Naive thymus-derived CD4-positive, alpha-beta T cell (primary cell): ENCODE measurements at regions of chr20 and their contacts with region 1.

Region 1: GRCh38 chr20:63553227-63553932 is 579 bp upstream of the FNDC11 start:
- DNase-seq: peak; percentile 81 to 96 (median 88)
- ATAC-seq: peak; percentile 92
- H3K4me3 ChIP-seq: peak overlapping the region; percentile 68
- H3K4me3 Mint-ChIP-seq: peak overlapping the region; percentile 70 to 85 (median 76)
- H3K27ac ChIP-seq: peak overlapping the region; percentile 70
- H3K27ac Mint-ChIP-seq: peak overlapping the region; percentile 62 to 97 (median 92)
- H3K4me1 ChIP-seq: peaks cover 13 to 21% of the 10 kb centered on the region in 2 donors
- H3K4me1 Mint-ChIP-seq: peaks cover 9 to 18% (median 13%) of the 10 kb centered on the region in 7 donors
- H3K27me3 ChIP-seq: no peaks in the 10 kb centered on the region
- H3K27me3 Mint-ChIP-seq: peaks cover 0 to 19% (median 5%) of the 10 kb centered on the region in 5 donors

Region 2: GRCh38 chr20:63567386-63568169 is 14.2 kb after region 1 on chr20:
- CTCF ChIA-PET with region 1: no interaction called
- POLR2A ChIA-PET with region 1: interaction called, 10 read pairs
- intact Hi-C with region 1: loop called (anchors 2 kb)
- DNase-seq: peak in 8 of 9 donors; percentile 33 to 66 (median 42)
- ATAC-seq: peak; percentile 84
- H3K4me3 ChIP-seq: peak overlapping the region; percentile 62
- H3K4me3 Mint-ChIP-seq: peak overlapping the region; percentile 70 to 86 (median 82)
- H3K27ac ChIP-seq: no peak overlapping the region
- H3K27ac Mint-ChIP-seq: peak overlapping the region in 5 of 9 donors; percentile 32 to 59 (median 48)
- H3K4me1 ChIP-seq: peaks cover 19 to 28% of the 10 kb centered on the region in 2 donors
- H3K4me1 Mint-ChIP-seq: peaks cover 9 to 34% (median 21%) of the 10 kb centered on the region in 7 donors
- H3K27me3 ChIP-seq: no peaks in the 10 kb centered on the region
- H3K27me3 Mint-ChIP-seq: no peaks in the 10 kb centered on the region

Region 3: GRCh38 chr20:63627129-63627750 is 73.9 kb after region 1 on chr20:
- CTCF ChIA-PET with region 1: no interaction called
- POLR2A ChIA-PET with region 1: interaction called, 6 read pairs
- intact Hi-C with region 1: loop called in 1 of 2 experiments (anchors 1 kb)
- DNase-seq: peak; percentile 74 to 99 (median 97)
- ATAC-seq: peak; percentile 93
- H3K4me3 ChIP-seq: peak overlapping the region; percentile 96
- H3K4me3 Mint-ChIP-seq: peak overlapping the region; percentile 93 to 99 (median 98)
- H3K27ac ChIP-seq: peak overlapping the region; percentile 85
- H3K27ac Mint-ChIP-seq: peak overlapping the region; percentile 79 to 98 (median 95)
- H3K4me1 ChIP-seq: peaks cover 29 to 40% of the 10 kb centered on the region in 2 donors
- H3K4me1 Mint-ChIP-seq: peaks cover 28 to 64% (median 42%) of the 10 kb centered on the region in 7 donors
- H3K27me3 ChIP-seq: no peaks in the 10 kb centered on the region
- H3K27me3 Mint-ChIP-seq: no peaks in the 10 kb centered on the region

Region 4: DNA sequence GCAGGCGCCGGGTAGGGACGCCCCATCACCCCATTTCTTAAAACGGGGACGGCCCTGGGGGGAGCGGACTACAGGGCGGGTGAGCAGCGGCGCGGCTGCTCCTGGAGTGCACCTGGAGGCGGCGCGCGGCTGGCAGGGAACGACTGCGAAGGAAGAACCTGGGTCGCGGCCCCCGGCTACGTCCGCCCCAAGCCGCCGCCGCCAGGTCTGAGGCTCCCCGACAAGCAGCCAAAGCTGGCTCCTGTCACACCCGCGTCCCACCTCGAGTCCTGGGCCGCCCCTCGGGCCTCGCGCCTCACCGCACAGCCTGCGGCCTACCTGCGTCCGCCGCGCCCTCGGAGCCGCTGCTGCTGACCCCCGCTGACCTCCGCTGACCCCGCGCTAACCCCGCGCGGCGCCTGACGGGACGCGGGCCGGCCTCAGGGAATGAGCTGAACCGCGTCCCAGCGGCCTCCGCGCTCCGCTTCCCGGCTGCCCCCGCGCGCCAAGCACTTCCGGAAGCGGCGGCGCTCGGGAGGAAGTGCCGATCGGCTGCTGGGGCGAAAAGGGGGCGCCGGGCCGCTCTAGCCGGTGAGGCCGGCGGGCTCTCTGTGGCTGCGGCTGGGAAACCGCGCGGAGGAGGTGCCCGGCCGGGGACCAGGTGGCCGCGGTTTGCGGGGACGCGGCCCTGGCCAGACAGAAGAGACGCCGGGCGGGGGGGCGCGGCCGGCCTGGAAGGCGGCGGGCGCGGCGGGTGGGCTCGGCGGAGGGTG is 154.3 kb after region 1 on chr20 and contains the starts of genes ARFRP1 and ZGPAT:
- CTCF ChIA-PET with region 1: no interaction called
- POLR2A ChIA-PET with region 1: no interaction called
- intact Hi-C with region 1: no loop called
- DNase-seq: peak; percentile 77 to 92 (median 88)
- ATAC-seq: peak; percentile 92
- H3K4me3 ChIP-seq: peak within 1 kb of the TSS; percentile 91
- H3K4me3 Mint-ChIP-seq: peak within 1 kb of the TSS; percentile 86 to 95 (median 90)
- H3K27ac ChIP-seq: peak within 1 kb of the TSS; percentile 81
- H3K27ac Mint-ChIP-seq: peak within 1 kb of the TSS; percentile 82 to 97 (median 87)
- H3K4me1 ChIP-seq: peaks cover 22 to 30% of the 10 kb centered on the region in 2 donors
- H3K4me1 Mint-ChIP-seq: peaks cover 33 to 61% (median 46%) of the 10 kb centered on the region in 7 donors
- H3K27me3 ChIP-seq: no peaks in the 10 kb centered on the region
- H3K27me3 Mint-ChIP-seq: no peaks in the 10 kb centered on the region
- total RNA-seq, gene ARFRP1: 55.4 to 92.1 (median 66.2) TPM
- total RNA-seq, gene ZGPAT: 42.9 to 49.9 (median 45.4) TPM

Region 5: GRCh38 chr20:63739130-63740069 is 186.0 kb after region 1 on chr20 and contains the start of gene SLC2A4RG:
- CTCF ChIA-PET with region 1: no interaction called
- POLR2A ChIA-PET with region 1: interaction called, 3 read pairs
- intact Hi-C with region 1: loop called in 1 of 2 experiments (anchors 2 kb)
- DNase-seq: peak; percentile 49 to 86 (median 69)
- ATAC-seq: peak; percentile 62
- H3K4me3 ChIP-seq: peak within 1 kb of the TSS; percentile 99
- H3K4me3 Mint-ChIP-seq: peak within 1 kb of the TSS; percentile 33 to 92 (median 80)
- H3K27ac ChIP-seq: peak within 1 kb of the TSS; percentile 71
- H3K27ac Mint-ChIP-seq: peak within 1 kb of the TSS in 1 of 9 donors; percentile 38
- H3K4me1 ChIP-seq: peaks cover 21 to 29% of the 10 kb centered on the region in 2 donors
- H3K4me1 Mint-ChIP-seq: peaks cover 7 to 20% (median 16%) of the 10 kb centered on the region in 7 donors
- H3K27me3 ChIP-seq: no peaks in the 10 kb centered on the region
- H3K27me3 Mint-ChIP-seq: no peaks in the 10 kb centered on the region
- total RNA-seq, gene SLC2A4RG: 88.7 to 136 (median 111) TPM

Region 6: DNA sequence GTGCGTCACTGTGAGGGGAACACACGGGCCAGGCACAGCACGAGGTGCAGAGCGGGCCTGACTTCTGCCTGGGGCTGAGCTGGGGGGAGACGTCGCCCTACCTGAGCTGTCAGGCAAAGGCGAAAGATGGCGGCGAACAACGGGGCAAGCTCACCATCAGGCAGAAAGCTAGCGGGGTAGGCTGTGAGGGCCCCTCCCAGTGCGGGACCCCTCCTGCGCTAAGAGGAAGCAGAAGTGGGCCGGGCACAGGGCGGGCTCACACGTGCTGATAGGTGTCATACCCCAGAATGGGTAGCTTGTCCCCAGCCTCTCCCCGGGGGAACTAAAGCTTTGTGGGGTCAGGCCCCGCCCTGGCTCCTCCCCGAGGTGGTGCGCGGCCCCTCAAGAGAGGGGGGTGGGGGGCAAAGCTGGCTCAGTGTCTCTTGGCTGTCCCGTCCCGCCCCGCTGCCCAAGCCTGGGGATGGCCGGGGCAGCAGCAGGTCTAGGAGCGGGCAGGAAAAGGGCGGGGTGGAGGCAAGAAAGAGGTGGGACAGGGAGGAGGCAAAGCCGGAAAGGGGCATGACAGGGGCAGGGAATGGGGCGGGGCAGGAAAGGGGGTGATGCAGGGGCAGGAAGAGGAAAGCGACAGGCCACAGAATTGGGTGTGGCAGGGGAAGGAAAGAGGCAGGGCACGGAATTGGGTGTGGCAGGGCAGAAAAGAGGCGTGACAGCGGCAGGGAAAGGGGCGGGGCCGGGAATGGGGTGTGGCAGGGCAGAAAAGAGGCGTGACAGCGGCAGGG is 388.1 kb after region 1 on chr20:
- CTCF ChIA-PET with region 1: no interaction called
- POLR2A ChIA-PET with region 1: no interaction called
- intact Hi-C with region 1: loop called in 1 of 2 experiments (anchors 1 kb)
- DNase-seq: peak; percentile 51 to 81 (median 71)
- ATAC-seq: peak; percentile 92
- H3K4me3 ChIP-seq: no peak overlapping the region
- H3K4me3 Mint-ChIP-seq: peak overlapping the region in 6 of 10 donors; percentile 17 to 75 (median 66)
- H3K27ac ChIP-seq: peak overlapping the region; percentile 51
- H3K27ac Mint-ChIP-seq: peak overlapping the region in 8 of 9 donors; percentile 59 to 92 (median 86)
- H3K4me1 ChIP-seq: peaks cover 7 to 16% of the 10 kb centered on the region in 2 donors
- H3K4me1 Mint-ChIP-seq: peaks cover 0 to 33% (median 17%) of the 10 kb centered on the region in 7 donors
- H3K27me3 ChIP-seq: no peaks in the 10 kb centered on the region
- H3K27me3 Mint-ChIP-seq: no peaks in the 10 kb centered on the region